ENCODE measurements at regions of chr17 and their contacts with region 1.

Region 1: GRCh38 chr17:49016788-49017463 is 19.7 kb downstream of the IGF2BP1 start:
- DNase-seq: peak; percentile 91 to 95
- ATAC-seq: peak; percentile 64 to 74
- H3K4me3 ChIP-seq: no peak overlapping the region
- H3K27ac ChIP-seq: peak overlapping the region; percentile 60 to 77; a peak in 5 of 6 replicates
- H3K4me1 ChIP-seq: peaks cover 100% of the 10 kb centered on the region
- CTCF ChIP-seq: no peak
- EP300 ChIP-seq: no peak
- POLR2A ChIP-seq: no peak
- RAD21 ChIP-seq: peak; percentile 16 to 42; a peak in 3 of 5 replicates

Region 2: DNA sequence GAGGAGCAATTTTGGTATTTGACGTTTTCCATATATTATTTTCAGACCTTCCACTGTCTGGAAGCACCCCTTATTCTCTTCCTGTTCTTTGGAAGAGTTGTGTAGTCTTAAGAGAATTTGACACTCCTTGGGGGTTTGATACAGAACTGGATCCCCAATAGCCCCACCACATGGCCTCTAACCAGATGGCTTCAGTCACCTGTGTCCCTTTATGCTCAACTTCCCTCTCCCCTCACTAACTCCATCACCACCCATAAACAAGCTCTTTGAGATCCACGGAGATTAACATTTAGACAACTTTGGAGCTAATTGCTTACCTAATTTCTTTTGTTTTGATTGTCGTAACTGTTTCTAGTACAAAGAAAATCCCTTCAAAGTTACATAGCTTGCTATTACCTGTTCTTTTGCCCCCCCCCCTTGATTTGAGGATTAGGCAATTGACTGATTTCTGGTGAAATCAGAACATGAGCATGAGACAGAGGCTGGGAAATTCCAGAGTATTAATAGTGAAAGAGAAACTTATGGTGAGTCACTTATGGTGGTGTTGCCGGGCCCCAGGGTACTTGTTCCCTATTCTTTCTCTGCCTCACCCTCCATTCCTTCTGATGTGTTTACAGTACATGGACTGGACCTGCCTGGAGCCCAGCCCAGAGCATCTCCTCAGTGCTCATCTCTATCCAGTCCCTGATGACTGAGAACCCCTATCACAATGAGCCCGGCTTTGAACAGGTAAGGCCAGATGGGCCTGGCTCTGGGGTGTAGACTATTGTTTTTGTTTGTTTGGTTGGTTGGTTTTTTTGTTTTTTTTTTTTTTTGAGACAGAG is 101.3 kb before region 1 on chr17:
- CTCF ChIA-PET with region 1: no interaction called
- POLR2A ChIA-PET with region 1: no interaction called
- DNase-seq: peak; percentile 62 to 70
- ATAC-seq: peak; percentile 87 to 93
- H3K4me3 ChIP-seq: peak overlapping the region; percentile 13; the same call in 1 of the 3 replicates
- H3K27ac ChIP-seq: peak overlapping the region; percentile 70 to 77
- H3K4me1 ChIP-seq: peaks cover 47% of the 10 kb centered on the region
- CTCF ChIP-seq: no peak
- EP300 ChIP-seq: peak in 1 of 2 experiments; percentile 27; a peak in 1 of 5 replicates
- POLR2A ChIP-seq: no peak
- RAD21 ChIP-seq: no peak

Region 3: DNA sequence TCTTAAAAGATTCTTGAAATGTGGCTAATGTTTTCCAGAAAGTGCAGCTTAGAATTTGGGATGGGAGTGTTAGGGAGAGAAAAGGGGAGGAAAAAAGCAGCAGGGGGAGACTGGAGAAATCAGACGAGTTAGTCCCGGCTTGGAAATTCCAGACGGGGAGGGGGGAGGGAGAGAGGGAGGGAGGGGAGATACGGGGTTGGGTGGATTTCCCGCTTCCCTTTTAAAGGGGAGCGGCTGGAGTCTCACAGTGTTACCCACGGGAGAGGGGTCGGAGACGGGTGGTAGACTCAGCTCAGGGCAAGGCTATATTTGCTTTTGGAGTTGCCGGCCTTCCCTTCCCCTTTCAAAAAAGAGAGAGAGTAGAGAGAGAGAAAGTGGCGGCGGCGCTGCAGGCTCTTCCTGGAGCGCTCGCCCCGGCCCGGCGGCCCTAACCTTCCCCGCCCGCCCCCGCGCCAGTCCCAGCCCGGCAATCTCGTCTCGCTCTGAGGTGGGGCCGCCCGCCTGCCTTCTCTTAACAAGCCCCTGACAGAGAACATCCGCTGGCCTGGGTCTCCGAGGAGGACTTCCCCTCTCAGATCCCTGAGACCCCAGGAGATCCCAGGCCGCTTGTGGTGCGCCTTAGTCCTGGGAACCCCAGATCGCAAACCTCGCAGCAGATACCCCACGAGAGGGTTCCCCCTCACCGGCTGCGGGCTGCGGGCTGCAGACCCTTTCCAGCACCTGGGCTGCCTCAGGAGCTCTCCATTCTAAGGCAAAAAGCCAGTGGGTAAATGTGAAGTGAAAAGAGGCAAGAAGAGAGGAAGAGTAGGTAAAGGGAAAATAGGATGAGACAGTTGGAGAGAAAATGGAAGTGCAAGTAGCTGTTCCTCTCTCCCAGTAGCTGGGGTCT is 13.1 kb before region 1 on chr17:
- CTCF ChIA-PET with region 1: interaction called, 54 read pairs
- POLR2A ChIA-PET with region 1: interaction called, 34 read pairs
- DNase-seq: no peak
- ATAC-seq: peak in 1 of 2 experiments; percentile 56; a peak in 3 of 6 replicates
- H3K4me3 ChIP-seq: peak overlapping the region; percentile 60
- H3K27ac ChIP-seq: peak overlapping the region; percentile 80 to 93
- H3K4me1 ChIP-seq: peaks cover 79% of the 10 kb centered on the region
- CTCF ChIP-seq: no peak
- EP300 ChIP-seq: no peak
- POLR2A ChIP-seq: no peak
- RAD21 ChIP-seq: no peak; a peak in 1 of 5 replicates

Measured in A549 (cell line).